ENCODE measurements at regions of chr6 and their contacts with region 1.

Region 1: GRCh38 chr6:15905488-15906440 is 223.1 kb upstream of the MYLIP start:
- DNase-seq: no peak
- H3K4me3 ChIP-seq: no peak overlapping the region
- H3K27ac ChIP-seq: no peak overlapping the region
- H3K4me1 ChIP-seq: peaks cover 20 to 36% (median 32%) of the 10 kb centered on the region in 4 experiments; a peak in 6 of 7 replicates
- H3K27me3 ChIP-seq: no peaks in the 10 kb centered on the region
- CTCF ChIP-seq: no peak
- EP300 ChIP-seq: no peak
- POLR2A ChIP-seq: no peak
- RAD21 ChIP-seq: no peak

Region 2: DNA sequence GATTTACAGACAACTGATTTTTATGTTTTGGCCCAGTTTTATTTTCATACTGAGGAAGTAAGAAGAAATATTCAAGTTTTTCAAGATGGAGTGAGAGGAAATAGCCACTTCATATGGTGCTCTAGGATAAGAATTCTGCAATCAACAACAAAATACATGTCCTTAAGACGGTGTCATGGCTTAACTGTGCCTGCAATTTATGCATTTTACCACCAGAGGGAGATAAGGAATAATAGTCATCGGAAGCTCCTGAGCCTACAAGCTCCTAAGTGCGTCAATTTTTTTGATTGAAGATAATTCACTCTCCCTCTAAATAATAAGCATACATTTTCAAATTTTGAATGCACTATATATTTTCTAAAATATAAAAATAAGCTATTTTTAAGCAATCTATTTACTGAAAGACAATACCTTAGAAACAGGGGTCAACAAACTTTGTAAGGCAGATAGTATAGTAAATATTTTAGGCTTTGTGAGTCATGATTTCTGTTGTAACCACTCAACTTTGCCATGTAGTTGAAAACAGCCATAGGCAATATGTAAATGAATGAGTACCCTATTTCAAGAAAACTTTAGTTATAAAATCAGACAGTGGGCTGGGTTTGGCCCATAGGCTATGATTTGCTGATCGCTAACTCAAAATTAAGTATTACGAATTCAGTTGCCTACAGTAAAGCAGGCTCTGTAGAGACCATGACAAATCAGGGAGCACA is 12.1 kb before region 1 on chr6:
- CTCF ChIA-PET with region 1: interaction called, 55 read pairs
- POLR2A ChIA-PET with region 1: interaction called, 15 read pairs
- DNase-seq: no peak
- H3K4me3 ChIP-seq: peak overlapping the region in 1 of 4 experiments; percentile 43; a peak in 1 of 8 replicates
- H3K27ac ChIP-seq: peak overlapping the region; percentile 46
- H3K4me1 ChIP-seq: peaks cover 10 to 15% (median 14%) of the 10 kb centered on the region in 4 experiments; a peak in 6 of 7 replicates
- H3K27me3 ChIP-seq: no peaks in the 10 kb centered on the region
- CTCF ChIP-seq: peak in 2 of 3 experiments; percentile 45 to 71; a peak in 2 of 4 replicates
- EP300 ChIP-seq: no peak
- POLR2A ChIP-seq: no peak
- RAD21 ChIP-seq: peak; percentile 63 to 73

Region 3: GRCh38 chr6:16019462-16019861 is 113.7 kb after region 1 on chr6:
- CTCF ChIA-PET with region 1: no interaction called
- POLR2A ChIA-PET with region 1: no interaction called
- DNase-seq: no peak
- H3K4me3 ChIP-seq: no peak overlapping the region
- H3K27ac ChIP-seq: no peak overlapping the region
- H3K4me1 ChIP-seq: no peaks in the 10 kb centered on the region
- H3K27me3 ChIP-seq: no peaks in the 10 kb centered on the region
- CTCF ChIP-seq: no peak
- EP300 ChIP-seq: no peak
- POLR2A ChIP-seq: no peak
- RAD21 ChIP-seq: no peak